Body of pancreas (tissue), 4 donors: ENCODE measurements at regions of chr15 and their contacts with region 1.

Region 1: GRCh38 chr15:72284781-72285180 is 12.4 kb upstream of the PARP6 start:
- DNase-seq: no peak
- ATAC-seq: no peak
- H3K4me3 ChIP-seq: no peak overlapping the region
- H3K27ac ChIP-seq: no peak overlapping the region
- H3K4me1 ChIP-seq: no peaks in the 10 kb centered on the region
- H3K27me3 ChIP-seq: no peaks in the 10 kb centered on the region
- CTCF ChIP-seq: no peak
- POLR2A ChIP-seq: no peak

Region 2: DNA sequence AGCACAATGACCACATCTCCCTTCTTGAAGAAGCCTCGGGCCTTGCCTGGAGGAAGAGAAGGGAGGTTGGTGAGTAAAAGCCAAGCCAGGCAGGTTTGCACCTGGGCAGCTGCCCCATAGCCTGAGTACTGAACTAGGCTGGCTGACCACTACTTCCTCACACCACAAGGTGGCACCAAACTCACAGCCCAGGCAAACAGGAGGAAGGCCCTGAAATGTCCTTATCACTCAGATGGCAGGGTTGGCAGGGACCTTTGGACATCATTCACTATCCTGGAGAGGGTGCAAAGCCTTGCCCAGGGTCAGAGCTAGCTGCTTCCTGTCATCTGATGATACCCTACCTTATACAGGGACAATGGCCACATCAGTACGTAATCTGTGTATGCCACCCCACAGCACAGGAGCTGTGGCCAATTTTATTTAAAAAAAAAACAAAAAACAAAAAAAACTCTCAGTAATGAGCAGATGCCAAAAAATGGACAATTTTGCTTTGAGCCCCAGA is 85.0 kb before region 1 on chr15:
- intact Hi-C with region 1: loop called (anchors 5 kb)
- DNase-seq: peak; percentile 81 to 85 (median 82)
- ATAC-seq: peak; percentile 73
- H3K4me3 ChIP-seq: no peak overlapping the region
- H3K27ac ChIP-seq: no peak overlapping the region
- H3K4me1 ChIP-seq: peaks cover 7% of the 10 kb centered on the region
- H3K27me3 ChIP-seq: peaks cover 0 to 6% of the 10 kb centered on the region in 2 donors
- CTCF ChIP-seq: peak; percentile 83 to 93 (median 86)
- POLR2A ChIP-seq: no peak

Region 3: DNA sequence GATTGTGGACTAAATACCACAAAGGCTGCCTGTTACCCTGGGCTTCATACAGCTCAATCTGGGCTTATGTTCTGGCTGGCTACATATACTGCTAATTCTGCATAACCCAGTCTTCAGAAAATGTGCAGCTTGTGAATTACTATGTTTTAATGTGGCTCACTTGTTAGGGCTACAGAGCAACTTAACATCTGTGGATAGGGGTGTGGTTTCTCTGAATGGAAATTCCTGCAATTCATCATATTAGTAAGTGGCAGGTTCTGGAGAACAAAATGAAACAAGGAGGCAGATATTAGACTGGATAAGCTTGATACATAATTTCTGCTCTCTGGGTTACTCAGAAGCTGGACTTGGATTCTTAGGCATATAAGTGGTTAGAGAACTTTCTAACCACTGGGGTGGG is 120.1 kb after region 1 on chr15:
- intact Hi-C with region 1: no loop called
- DNase-seq: no peak
- ATAC-seq: no peak
- H3K4me3 ChIP-seq: no peak overlapping the region
- H3K27ac ChIP-seq: no peak overlapping the region
- H3K4me1 ChIP-seq: no peaks in the 10 kb centered on the region
- H3K27me3 ChIP-seq: no peaks in the 10 kb centered on the region
- CTCF ChIP-seq: no peak
- POLR2A ChIP-seq: no peak